KBM-7 (cell line): ENCODE measurements at regions of chr21 and their contacts with region 1.

Region 1: DNA sequence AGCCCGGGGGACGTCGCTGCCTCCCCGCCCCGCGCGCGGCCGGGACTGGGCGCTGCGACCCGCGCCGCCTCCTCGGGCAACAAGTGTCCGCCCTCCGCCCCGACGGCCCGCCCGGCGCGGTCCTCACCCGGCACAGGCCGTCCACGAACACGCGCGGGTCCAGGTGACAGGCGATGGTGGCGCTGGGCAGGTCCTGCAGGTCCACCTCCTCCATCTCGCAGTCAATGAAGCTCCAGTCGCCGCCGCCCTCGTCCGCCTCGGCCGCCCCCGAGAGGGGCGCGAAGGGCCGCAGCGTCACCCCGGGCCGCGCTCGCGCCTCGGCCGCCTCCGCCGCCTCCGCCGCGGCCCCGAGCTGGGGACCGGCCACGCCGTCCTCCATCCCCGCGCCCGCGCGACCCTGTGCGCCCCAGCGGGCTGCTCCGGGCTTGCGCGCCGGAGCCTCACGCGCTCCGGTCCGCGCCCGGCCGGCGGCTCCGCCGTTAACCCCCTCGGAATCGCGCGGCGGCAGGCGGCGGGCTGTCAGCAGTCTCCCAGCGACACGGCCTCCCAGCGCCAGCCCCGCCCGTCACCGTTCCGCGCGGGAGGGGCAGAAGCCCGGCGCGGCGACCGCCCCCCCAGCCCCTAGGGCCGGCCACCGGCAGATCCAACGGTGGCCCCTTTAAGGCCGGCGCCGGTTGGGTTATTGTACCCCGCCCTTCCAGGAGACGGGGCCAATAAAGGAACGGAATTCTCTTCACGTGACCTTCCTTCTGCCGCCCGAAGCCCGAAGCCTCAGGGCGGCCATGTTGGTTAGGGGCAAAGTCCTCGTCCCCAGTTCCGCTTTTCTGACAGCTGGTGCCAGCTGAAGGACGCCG is at the start of gene RCAN1:
- DNase-seq: peak; percentile 98

Region 2: GRCh38 chr21:33761441-33762036 is 853.3 kb before region 1 on chr21:
- in situ Hi-C with region 1: no loop called
- DNase-seq: peak; percentile 66

Region 3: GRCh38 chr21:33915368-33916199 is 699.3 kb before region 1 on chr21 and contains the start of gene ATP5PO:
- in situ Hi-C with region 1: loop called (anchors 25 kb)
- DNase-seq: peak; percentile 96

Region 4: DNA sequence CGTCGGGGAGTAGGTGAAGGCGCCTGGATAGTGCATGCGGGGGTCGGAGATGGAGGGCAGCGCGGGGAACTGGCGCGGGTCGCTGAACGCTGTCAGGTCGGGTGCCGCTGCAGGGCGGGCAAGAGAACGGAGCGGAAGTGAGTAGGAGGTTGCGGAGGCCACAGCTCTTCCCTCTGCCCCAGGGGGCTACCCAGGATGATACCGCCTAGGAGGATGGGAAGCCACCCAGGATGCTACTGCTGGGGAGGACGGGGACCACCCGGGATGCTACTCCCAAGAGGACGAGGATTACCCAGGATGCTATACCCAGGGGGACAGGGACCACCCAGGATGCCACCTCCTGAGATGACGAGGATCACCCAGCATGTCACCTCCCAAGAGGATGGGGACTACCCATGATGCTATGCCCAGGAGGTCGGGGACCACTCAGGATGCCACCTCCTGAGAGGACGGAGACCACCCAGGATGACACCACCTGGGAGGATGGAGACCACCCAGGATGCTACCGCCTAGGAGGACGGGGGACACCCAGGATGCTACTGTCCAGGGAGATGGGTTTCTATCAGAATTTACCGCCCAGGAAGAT is 177.7 kb after region 1 on chr21:
- in situ Hi-C with region 1: no loop called
- DNase-seq: no peak